ENCODE measurements at regions of chr19 and their contacts with region 1.

Region 1: DNA sequence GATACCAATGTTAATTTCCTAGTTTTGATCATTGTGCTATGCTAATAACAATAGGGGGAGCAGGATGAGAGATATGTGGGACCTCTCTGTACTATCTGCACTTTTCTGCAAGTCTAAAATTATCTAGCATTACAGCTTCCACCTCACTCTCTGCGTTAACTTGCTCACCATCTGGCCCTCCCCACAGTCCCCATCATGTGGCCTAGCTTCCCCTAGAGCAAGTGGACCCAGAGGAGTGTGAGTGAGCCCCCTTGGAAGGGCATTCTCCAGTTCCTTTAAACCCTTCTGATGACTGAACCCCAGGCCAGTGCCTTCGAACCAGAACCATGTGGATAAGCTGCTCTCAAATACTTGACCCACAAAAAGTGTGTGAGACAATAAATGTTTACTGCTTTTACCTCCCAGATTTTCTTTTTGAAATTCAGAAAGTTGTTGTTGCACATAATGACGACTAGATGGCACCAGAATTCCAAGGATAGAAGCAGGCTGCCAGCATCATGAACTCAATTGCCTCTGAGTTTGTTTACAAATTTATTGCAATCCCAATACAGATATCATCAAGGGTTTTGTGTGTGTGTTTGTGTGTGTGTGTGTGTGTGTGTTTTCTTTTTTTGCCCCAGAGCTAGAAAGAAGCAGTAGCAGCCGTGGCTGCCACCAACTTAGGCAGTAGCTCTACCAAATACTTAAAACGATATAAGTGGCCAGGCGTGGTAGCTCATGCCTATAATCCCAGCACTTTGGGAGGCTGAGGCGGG is 49.0 kb upstream of the ZNF780A start:
- DNase-seq: peak in 2 of 5 donors; percentile 52 to 54
- H3K4me3 ChIP-seq: no peak overlapping the region
- H3K4me3 Mint-ChIP-seq: no peak overlapping the region
- H3K27ac ChIP-seq: no peak overlapping the region
- H3K27ac Mint-ChIP-seq: peak overlapping the region in 2 of 8 donors; percentile 52 to 57
- H3K4me1 ChIP-seq: peaks cover 28% of the 10 kb centered on the region
- H3K4me1 Mint-ChIP-seq: peaks cover 22 to 38% (median 35%) of the 10 kb centered on the region in 3 donors
- H3K27me3 ChIP-seq: no peaks in the 10 kb centered on the region
- H3K27me3 Mint-ChIP-seq: peaks cover 15 to 18% of the 10 kb centered on the region in 2 donors

Region 2: DNA sequence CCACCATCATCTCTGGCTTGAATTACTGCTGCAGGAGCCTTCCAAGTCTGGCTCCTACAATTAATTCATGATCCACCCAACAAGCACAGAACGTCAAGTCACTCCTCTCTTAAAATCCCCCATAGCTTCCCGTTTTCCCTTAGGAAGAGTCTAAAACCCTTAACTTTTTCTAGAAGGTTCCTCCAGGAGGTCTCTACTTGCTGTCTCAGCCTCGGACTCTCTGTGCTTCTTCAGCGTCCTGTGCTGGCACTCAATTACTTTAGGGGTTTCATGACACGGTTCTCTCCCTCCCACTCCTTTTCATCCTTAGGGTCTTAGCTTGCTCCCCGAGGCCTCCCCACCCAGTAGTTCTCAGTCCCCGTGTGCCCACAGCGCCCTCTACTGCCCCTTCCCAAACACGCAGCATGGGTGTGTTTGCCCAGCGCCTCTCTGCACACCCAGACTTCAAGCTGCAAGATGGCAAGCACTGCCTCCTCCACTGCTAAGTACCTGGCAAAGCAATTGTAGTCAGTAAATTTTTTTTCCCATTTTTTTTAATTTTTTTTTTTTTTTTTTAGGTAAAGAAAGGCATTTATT is 25.7 kb after region 1 on chr19:
- CTCF ChIA-PET with region 1: interaction called, 13 read pairs
- POLR2A ChIA-PET with region 1: no interaction called
- DNase-seq: peak; percentile 45 to 70 (median 59)
- H3K4me3 ChIP-seq: no peak overlapping the region
- H3K4me3 Mint-ChIP-seq: peak overlapping the region in 4 of 7 donors; percentile 27 to 73 (median 56)
- H3K27ac ChIP-seq: no peak overlapping the region
- H3K27ac Mint-ChIP-seq: peak overlapping the region; percentile 27 to 87 (median 60)
- H3K4me1 ChIP-seq: peaks cover 18% of the 10 kb centered on the region
- H3K4me1 Mint-ChIP-seq: peaks cover 17 to 30% (median 17%) of the 10 kb centered on the region in 3 donors
- H3K27me3 ChIP-seq: no peaks in the 10 kb centered on the region
- H3K27me3 Mint-ChIP-seq: peaks cover 0 to 16% of the 10 kb centered on the region in 2 donors

Region 3: GRCh38 chr19:40221858-40222837 is 82.4 kb after region 1 on chr19:
- CTCF ChIA-PET with region 1: interaction called, 14 read pairs
- POLR2A ChIA-PET with region 1: interaction called, 3 read pairs
- DNase-seq: peak; percentile 55 to 82 (median 77)
- H3K4me3 ChIP-seq: no peak overlapping the region
- H3K4me3 Mint-ChIP-seq: peak overlapping the region in 6 of 7 donors; percentile 19 to 52 (median 32)
- H3K27ac ChIP-seq: no peak overlapping the region
- H3K27ac Mint-ChIP-seq: peak overlapping the region in 4 of 8 donors; percentile 3 to 50 (median 24)
- H3K4me1 ChIP-seq: peaks cover 26% of the 10 kb centered on the region
- H3K4me1 Mint-ChIP-seq: peaks cover 11 to 25% (median 17%) of the 10 kb centered on the region in 3 donors
- H3K27me3 ChIP-seq: peaks cover 35% of the 10 kb centered on the region
- H3K27me3 Mint-ChIP-seq: peaks cover 46 to 64% of the 10 kb centered on the region in 2 donors

Measured in CD8-positive, alpha-beta memory T cell (primary cell).